ENCODE measurements at regions of chr17 and their contacts with region 1.

Region 1: GRCh38 chr17:1882836-1883235 is 53.0 kb downstream of the RPA1 start:
- DNase-seq: no peak
- ATAC-seq: no peak
- H3K4me3 ChIP-seq: no peak overlapping the region
- H3K27ac ChIP-seq: no peak overlapping the region
- H3K4me1 ChIP-seq: peaks cover 4% of the 10 kb centered on the region
- H3K27me3 ChIP-seq: no peaks in the 10 kb centered on the region

Region 2: GRCh38 chr17:1186923-1187771 is 695.7 kb before region 1 on chr17:
- intact Hi-C with region 1: no loop called
- DNase-seq: peak; percentile 88 to 95 (median 94)
- ATAC-seq: peak; percentile 91 to 92
- H3K4me3 ChIP-seq: peak overlapping the region; percentile 27
- H3K27ac ChIP-seq: peak overlapping the region; percentile 75
- H3K4me1 ChIP-seq: peaks cover 15% of the 10 kb centered on the region
- H3K27me3 ChIP-seq: no peaks in the 10 kb centered on the region

Region 3: GRCh38 chr17:1673041-1673785 is 209.6 kb before region 1 on chr17:
- intact Hi-C with region 1: no loop called
- DNase-seq: no peak
- ATAC-seq: no peak
- H3K4me3 ChIP-seq: no peak overlapping the region
- H3K27ac ChIP-seq: no peak overlapping the region
- H3K4me1 ChIP-seq: peaks cover 2% of the 10 kb centered on the region
- H3K27me3 ChIP-seq: no peaks in the 10 kb centered on the region

Region 4: DNA sequence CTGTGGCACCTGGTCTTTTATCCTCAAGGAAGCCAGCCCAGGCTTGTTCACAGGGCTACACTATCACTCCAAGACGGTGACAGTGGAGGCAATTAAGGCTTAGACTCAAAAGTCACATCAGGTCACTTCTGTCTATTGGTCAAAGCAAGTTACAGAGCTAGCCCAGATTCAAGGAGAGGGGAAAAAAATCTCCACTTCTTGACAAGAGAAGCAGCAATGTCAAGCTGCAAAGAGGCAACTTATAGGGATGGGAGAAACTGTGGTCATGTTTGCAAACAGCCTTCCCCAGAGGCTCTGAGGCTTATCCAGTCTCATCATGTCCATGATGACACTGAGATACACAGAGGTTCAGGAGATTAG is 89.4 kb before region 1 on chr17:
- intact Hi-C with region 1: loop called in 1 of 4 experiments (anchors 10 kb)
- DNase-seq: no peak
- ATAC-seq: no peak
- H3K4me3 ChIP-seq: no peak overlapping the region
- H3K27ac ChIP-seq: peak overlapping the region; percentile 13
- H3K4me1 ChIP-seq: no peaks in the 10 kb centered on the region
- H3K27me3 ChIP-seq: no peaks in the 10 kb centered on the region

Region 5: DNA sequence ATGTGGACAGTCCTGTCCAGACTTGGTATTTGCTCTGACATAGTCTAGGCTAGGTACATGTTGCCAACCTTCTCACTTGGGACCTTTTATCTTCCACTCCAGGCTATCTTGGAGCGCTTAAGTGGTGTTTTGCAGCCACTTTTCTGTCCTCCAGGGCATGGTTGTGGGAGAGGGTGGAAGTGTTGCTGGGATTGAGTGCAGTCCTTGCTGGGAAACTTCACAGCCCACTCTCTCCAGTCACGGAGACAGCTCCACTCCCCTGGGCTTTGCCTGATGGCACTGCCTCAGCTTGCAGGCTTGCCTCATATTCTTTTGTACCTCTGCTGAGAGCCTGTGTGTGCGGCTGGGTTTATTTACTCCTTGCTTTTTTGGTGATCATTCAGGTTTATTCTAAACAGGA is 35.6 kb before region 1 on chr17:
- intact Hi-C with region 1: no loop called
- DNase-seq: peak; percentile 66 to 88 (median 87)
- ATAC-seq: peak; percentile 94 to 98
- H3K4me3 ChIP-seq: no peak overlapping the region
- H3K27ac ChIP-seq: peak overlapping the region; percentile 18
- H3K4me1 ChIP-seq: peaks cover 3% of the 10 kb centered on the region
- H3K27me3 ChIP-seq: no peaks in the 10 kb centered on the region

Measured in right cardiac atrium (tissue), 5 donors.